Activated T-helper 1 cell treated with anti-CD3 and anti-CD28 coated beads, Interleukin-12 subunit alpha, Interleukin-12 subunit beta, Interleukin-2, Interleukin-4 antibody, amounts not matched to agents 30 ng/mL and 10 ng/mL and 1 ng/mL, durations not matched to agents 14 hours and 24 hours and 36 hours (primary cell): ENCODE measurements at regions of chr12 and their contacts with region 1.

Region 1: DNA sequence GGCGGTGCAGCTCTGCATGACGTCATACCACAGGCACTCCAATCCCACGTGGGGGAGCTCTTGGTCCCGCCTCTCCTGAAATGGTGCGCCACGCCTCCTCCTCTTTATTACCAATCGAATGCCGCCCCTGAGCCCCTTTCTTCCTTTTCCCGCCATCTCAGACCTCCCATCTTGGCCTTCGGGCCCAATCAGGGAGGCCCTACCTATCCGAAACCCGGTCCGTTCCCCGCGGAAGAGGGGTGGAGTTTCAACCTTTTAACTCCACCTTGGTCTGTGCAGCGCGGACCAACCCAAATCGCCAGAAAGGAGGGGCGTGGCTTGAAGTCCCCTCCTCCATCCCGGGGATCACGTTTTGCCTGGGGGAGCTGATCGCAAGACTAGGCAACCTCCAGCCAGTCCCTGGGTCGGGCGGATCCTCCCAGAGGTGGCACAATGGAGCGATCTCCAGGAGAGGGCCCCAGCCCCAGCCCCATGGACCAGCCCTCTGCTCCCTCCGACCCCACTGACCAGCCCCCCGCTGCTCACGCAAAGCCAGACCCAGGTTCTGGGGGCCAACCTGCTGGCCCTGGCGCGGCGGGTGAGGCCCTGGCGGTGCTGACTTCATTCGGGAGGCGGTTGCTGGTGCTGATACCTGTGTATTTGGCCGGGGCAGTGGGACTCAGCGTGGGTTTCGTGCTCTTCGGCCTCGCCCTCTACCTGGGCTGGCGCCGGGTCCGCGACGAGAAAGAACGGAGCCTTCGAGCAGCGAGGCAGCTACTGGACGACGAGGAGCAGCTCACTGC is at the start of gene ESYT1:
- DNase-seq: peak; percentile 98
- H3K4me3 Mint-ChIP-seq: peak within 1 kb of the TSS; percentile 97
- H3K27ac Mint-ChIP-seq: peak within 1 kb of the TSS; percentile 94
- H3K4me1 Mint-ChIP-seq: peaks cover 62% of the 10 kb centered on the region
- H3K27me3 Mint-ChIP-seq: no peaks in the 10 kb centered on the region
- total RNA-seq, gene ESYT1: 159 and 161 TPM in 2 replicates

Region 2: GRCh38 chr12:56152318-56153033 is 24.4 kb after region 1 on chr12 and contains the start of gene MYL6B:
- intact Hi-C with region 1: loop called (anchors 1 kb)
- DNase-seq: peak; percentile 92
- H3K4me3 Mint-ChIP-seq: peak within 1 kb of the TSS; percentile 88
- H3K27ac Mint-ChIP-seq: peak within 1 kb of the TSS; percentile 99
- H3K4me1 Mint-ChIP-seq: peaks cover 39% of the 10 kb centered on the region
- H3K27me3 Mint-ChIP-seq: no peaks in the 10 kb centered on the region
- total RNA-seq, gene MYL6B: 58.8 and 67.6 TPM in 2 replicates

Region 3: GRCh38 chr12:56158029-56158925 is 30.2 kb after region 1 on chr12 and contains the start of gene MYL6:
- intact Hi-C with region 1: loop called (anchors 1 kb)
- DNase-seq: peak; percentile 90
- H3K4me3 Mint-ChIP-seq: peak within 1 kb of the TSS; percentile 97
- H3K27ac Mint-ChIP-seq: peak within 1 kb of the TSS; percentile 93
- H3K4me1 Mint-ChIP-seq: peaks cover 49% of the 10 kb centered on the region
- H3K27me3 Mint-ChIP-seq: no peaks in the 10 kb centered on the region
- total RNA-seq, gene MYL6: 786 and 802 TPM in 2 replicates

Region 4: DNA sequence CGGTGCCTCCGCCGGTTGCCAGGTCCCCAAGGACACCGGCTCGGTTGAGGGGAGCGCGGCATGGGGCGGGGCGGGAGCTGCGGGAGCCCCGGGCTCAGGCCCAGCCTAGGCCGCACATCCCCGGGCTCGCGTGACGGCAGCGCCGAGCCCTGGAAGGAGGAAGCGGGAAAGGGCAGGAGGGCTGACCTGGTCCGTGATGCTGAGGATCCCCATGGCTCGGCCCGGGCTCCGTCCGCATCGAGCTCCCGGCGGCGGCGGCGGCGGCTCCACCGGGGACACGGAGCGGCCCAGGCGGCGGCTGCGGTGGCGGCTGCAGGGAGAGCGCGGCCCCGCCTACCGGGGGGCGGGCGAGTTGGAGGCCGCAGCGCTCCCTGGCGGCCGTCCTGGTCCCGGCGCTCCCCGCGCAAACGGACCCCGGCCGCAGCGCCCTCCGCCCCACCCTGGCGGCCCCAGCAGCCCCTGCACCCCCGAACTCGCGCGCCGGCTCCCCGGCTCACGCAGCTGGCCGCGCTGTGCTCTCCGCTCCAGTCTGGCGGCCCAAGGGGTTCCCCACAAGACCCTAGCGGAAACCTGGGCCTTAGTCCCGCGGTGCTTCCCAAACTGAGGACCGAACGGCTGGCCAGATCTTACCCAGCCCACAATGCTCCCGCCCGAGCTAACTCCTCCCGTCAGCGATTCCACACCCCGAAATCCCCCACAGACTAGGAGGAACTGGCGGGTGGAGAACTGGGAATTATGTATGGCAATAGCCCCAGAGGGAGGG is 130.2 kb after region 1 on chr12 and contains the start of gene ANKRD52:
- intact Hi-C with region 1: loop called (anchors 2 kb)
- DNase-seq: peak; percentile 82
- H3K4me3 Mint-ChIP-seq: peak within 1 kb of the TSS; percentile 90
- H3K27ac Mint-ChIP-seq: peak within 1 kb of the TSS; percentile 83
- H3K4me1 Mint-ChIP-seq: peaks cover 22% of the 10 kb centered on the region
- H3K27me3 Mint-ChIP-seq: no peaks in the 10 kb centered on the region
- total RNA-seq, gene ANKRD52: 71.0 and 83.9 TPM in 2 replicates

Region 5: GRCh38 chr12:56266693-56267442 is 138.8 kb after region 1 on chr12 and contains the start of gene COQ10A:
- intact Hi-C with region 1: loop called (anchors 1 kb)
- DNase-seq: peak; percentile 84
- H3K4me3 Mint-ChIP-seq: peak within 1 kb of the TSS; percentile 96
- H3K27ac Mint-ChIP-seq: peak within 1 kb of the TSS; percentile 87
- H3K4me1 Mint-ChIP-seq: peaks cover 15% of the 10 kb centered on the region
- H3K27me3 Mint-ChIP-seq: no peaks in the 10 kb centered on the region
- total RNA-seq, gene COQ10A: 17.8 and 18.0 TPM in 2 replicates